Activated CD4-positive, alpha-beta T cell treated with anti-CD3 and anti-CD28 coated beads, Interleukin-2, amount 10 ng/mL, durations not matched to agents 24 days and 14 days (primary cell): ENCODE measurements at regions of chr1 and their contacts with region 1.

Region 1: DNA sequence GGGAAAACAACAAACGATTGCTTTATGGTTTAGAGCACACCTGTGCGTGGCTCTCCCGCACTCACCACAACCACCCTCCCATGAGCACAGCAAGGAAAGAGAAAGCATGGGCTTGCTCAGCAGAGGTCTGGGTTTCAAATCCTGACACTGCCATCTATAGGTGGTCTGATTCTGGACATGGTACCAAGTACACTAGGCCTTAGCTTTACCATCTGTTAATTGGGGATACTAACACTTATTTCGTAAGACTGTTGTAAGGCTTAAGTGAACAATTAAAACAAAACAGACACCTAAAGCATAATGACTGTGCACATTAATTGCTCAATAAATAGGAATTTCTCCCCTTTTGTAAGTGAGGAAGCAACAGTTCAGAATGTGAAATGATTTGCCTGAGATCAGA is 50.1 kb downstream of the HIVEP3 start:
- DNase-seq: peak; percentile 84
- H3K4me3 Mint-ChIP-seq: peak overlapping the region; percentile 35
- H3K27ac Mint-ChIP-seq: peak overlapping the region; percentile 81
- H3K4me1 Mint-ChIP-seq: peaks cover 34% of the 10 kb centered on the region
- H3K27me3 Mint-ChIP-seq: no peaks in the 10 kb centered on the region

Region 2: DNA sequence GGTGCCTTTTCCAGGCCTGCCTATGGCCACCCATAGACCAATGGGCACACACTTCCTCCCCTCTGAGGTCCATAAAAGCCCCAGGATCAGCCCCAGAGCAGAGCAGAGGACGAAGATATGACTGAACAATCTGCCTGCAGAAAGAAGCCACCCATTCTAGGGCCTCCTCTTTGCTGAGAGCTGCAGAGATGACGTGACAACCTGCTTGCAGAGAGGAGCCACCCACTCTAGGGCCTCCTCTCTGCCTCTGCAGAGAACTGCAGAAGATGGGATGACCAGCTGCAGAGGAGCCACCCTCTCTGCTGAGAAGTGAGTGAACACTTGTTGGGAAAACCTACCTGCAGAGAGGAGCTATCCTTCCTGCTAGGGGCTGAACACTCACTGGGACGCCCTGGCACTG is 706.2 kb before region 1 on chr1:
- intact Hi-C with region 1: no loop called
- DNase-seq: no peak
- H3K4me3 Mint-ChIP-seq: no peak overlapping the region
- H3K27ac Mint-ChIP-seq: no peak overlapping the region
- H3K4me1 Mint-ChIP-seq: peaks cover 2% of the 10 kb centered on the region
- H3K27me3 Mint-ChIP-seq: no peaks in the 10 kb centered on the region

Region 3: DNA sequence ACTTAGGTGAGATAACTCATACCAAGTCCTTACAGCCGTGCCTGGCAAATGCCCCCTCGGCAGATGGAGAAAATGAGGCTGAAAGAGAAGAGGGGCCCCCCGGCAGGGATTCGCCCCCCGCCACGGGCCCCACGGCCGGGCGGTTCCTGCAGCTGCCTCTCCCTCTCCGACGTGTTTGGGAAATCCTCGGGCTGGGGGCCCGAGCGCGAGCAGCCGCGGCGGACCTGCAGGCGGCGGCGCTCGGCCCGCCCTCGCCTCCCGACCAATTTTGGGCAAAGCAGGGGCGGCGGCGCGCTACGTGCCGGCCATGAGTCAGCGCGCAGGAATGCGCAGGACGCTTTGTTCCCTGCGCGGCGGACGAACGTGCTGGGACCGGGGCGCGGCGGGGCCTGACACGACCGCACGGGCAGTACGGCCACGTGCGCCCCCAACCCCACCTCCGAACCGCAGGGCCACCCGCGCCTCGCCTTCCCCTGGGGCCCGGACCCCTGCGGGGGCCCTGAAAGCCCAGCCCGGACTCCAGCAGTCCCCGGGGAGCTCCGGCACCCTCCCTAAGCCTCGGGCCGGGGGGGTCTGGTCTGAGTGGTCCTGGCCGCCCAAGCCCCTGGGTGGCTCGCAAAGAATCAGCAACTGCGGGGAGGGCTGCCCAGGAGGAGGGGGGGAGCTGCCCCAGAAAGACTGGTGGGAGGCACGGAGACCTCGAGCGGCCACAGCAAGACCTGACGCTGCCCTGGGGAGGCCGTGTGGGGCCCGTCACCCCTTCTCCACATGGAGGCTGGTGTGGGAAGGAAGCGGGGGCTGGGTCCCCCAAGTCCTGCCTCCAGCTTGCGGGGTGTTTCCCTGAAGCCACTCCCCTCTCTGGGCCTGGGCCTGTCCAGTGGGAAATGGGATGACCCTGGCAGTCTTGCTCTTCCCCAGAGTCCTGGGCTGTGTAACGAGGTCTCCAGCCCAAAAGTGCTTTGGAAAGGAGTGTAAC is 372.2 kb before region 1 on chr1:
- intact Hi-C with region 1: loop called (anchors 10 kb)
- DNase-seq: peak; percentile 82
- H3K4me3 Mint-ChIP-seq: peak overlapping the region; percentile 68
- H3K27ac Mint-ChIP-seq: no peak overlapping the region
- H3K4me1 Mint-ChIP-seq: peaks cover 10% of the 10 kb centered on the region
- H3K27me3 Mint-ChIP-seq: peaks cover 5% of the 10 kb centered on the region

Region 4: GRCh38 chr1:43156026-43156425 is 1287.4 kb after region 1 on chr1:
- intact Hi-C with region 1: no loop called
- DNase-seq: no peak
- H3K4me3 Mint-ChIP-seq: no peak overlapping the region
- H3K27ac Mint-ChIP-seq: no peak overlapping the region
- H3K4me1 Mint-ChIP-seq: no peaks in the 10 kb centered on the region
- H3K27me3 Mint-ChIP-seq: peaks cover 5% of the 10 kb centered on the region